ENCODE measurements at regions of chr15 and their contacts with region 1.

Region 1: DNA sequence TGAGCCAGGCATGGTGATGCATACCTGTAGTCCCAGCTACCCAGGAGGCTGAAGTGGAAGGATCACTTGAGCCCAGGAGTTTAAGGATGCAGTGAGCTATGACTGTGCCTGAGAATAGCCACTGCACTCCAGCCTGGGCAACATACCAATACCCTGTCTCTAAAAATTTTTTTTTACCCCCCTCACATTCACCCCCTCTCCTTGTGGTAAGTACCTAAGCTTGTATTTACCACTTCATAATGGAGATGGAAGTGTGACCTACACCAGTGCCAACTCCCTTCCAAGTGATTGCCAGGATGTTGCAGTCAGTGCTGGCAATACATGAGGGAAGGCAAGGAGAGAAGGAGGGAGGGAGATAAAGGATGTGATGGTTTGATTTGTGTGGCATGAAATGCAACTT is 84.2 kb downstream of the LRRC28 start:
- DNase-seq: no peak
- ATAC-seq: no peak
- H3K4me3 ChIP-seq: no peak overlapping the region
- H3K27ac ChIP-seq: no peak overlapping the region
- H3K4me1 ChIP-seq: no peaks in the 10 kb centered on the region
- H3K27me3 ChIP-seq: no peaks in the 10 kb centered on the region
- CTCF ChIP-seq: no peak

Region 2: GRCh38 chr15:99264125-99264524 is 71.4 kb before region 1 on chr15:
- CTCF ChIA-PET with region 1: interaction called, 13 read pairs
- POLR2A ChIA-PET with region 1: no interaction called
- in situ Hi-C with region 1: no loop called
- intact Hi-C with region 1: no loop called
- DNase-seq: no peak
- ATAC-seq: no peak
- H3K4me3 ChIP-seq: no peak overlapping the region
- H3K27ac ChIP-seq: no peak overlapping the region
- H3K4me1 ChIP-seq: 0 out of 2 replicates have a peak, but pooled peaks cover 4% of the 10 kb centered on the region
- H3K27me3 ChIP-seq: no peaks in the 10 kb centered on the region
- CTCF ChIP-seq: no peak

Region 3: DNA sequence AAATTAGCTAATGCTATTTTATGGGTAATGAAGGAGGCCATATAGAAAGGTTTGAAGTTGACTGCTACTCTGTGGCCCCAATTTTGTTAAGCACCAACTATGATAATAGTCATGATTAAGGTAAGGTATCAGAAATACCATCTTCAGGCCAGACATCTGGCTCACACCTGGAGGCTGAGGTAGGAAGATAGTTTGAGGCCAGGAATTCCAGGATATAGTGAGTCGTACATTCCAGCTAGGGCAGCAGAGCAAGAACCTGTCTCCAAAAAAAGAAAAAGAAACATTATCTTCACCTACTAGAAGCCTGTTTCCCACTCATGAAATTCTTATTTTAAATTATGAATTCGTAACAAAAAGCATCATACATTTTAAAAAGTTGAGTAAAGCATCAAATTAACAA is 19.9 kb before region 1 on chr15:
- CTCF ChIA-PET with region 1: no interaction called
- POLR2A ChIA-PET with region 1: no interaction called
- in situ Hi-C with region 1: no loop called
- intact Hi-C with region 1: no loop called
- DNase-seq: no peak
- ATAC-seq: no peak
- H3K4me3 ChIP-seq: no peak overlapping the region
- H3K27ac ChIP-seq: no peak overlapping the region
- H3K4me1 ChIP-seq: no peaks in the 10 kb centered on the region
- H3K27me3 ChIP-seq: no peaks in the 10 kb centered on the region
- CTCF ChIP-seq: no peak

Region 4: GRCh38 chr15:99399071-99399470 is 63.6 kb after region 1 on chr15:
- CTCF ChIA-PET with region 1: no interaction called
- POLR2A ChIA-PET with region 1: no interaction called
- in situ Hi-C with region 1: no loop called
- intact Hi-C with region 1: no loop called
- DNase-seq: no peak
- ATAC-seq: no peak
- H3K4me3 ChIP-seq: no peak overlapping the region
- H3K27ac ChIP-seq: no peak overlapping the region
- H3K4me1 ChIP-seq: no peaks in the 10 kb centered on the region
- H3K27me3 ChIP-seq: no peaks in the 10 kb centered on the region
- CTCF ChIP-seq: no peak

Region 5: GRCh38 chr15:100537331-100537730 is 1201.8 kb after region 1 on chr15:
- CTCF ChIA-PET with region 1: interaction called, 10 read pairs
- POLR2A ChIA-PET with region 1: no interaction called
- in situ Hi-C with region 1: no loop called
- intact Hi-C with region 1: no loop called
- DNase-seq: no peak
- ATAC-seq: no peak
- H3K4me3 ChIP-seq: no peak overlapping the region
- H3K27ac ChIP-seq: no peak overlapping the region
- H3K4me1 ChIP-seq: no peaks in the 10 kb centered on the region
- H3K27me3 ChIP-seq: peaks cover 2% of the 10 kb centered on the region; the same call in 1 of the 2 replicates
- CTCF ChIP-seq: no peak